ENCODE measurements at regions of chr19 and their contacts with region 1.

Region 1: GRCh38 chr19:53172892-53173291 is 14.0 kb upstream of the ZNF347 start:
- DNase-seq: no peak
- H3K4me3 ChIP-seq: no peak overlapping the region
- H3K27ac ChIP-seq: no peak overlapping the region
- H3K4me1 ChIP-seq: no peaks in the 10 kb centered on the region
- H3K27me3 ChIP-seq: no peaks in the 10 kb centered on the region
- CTCF ChIP-seq: no peak

Region 2: DNA sequence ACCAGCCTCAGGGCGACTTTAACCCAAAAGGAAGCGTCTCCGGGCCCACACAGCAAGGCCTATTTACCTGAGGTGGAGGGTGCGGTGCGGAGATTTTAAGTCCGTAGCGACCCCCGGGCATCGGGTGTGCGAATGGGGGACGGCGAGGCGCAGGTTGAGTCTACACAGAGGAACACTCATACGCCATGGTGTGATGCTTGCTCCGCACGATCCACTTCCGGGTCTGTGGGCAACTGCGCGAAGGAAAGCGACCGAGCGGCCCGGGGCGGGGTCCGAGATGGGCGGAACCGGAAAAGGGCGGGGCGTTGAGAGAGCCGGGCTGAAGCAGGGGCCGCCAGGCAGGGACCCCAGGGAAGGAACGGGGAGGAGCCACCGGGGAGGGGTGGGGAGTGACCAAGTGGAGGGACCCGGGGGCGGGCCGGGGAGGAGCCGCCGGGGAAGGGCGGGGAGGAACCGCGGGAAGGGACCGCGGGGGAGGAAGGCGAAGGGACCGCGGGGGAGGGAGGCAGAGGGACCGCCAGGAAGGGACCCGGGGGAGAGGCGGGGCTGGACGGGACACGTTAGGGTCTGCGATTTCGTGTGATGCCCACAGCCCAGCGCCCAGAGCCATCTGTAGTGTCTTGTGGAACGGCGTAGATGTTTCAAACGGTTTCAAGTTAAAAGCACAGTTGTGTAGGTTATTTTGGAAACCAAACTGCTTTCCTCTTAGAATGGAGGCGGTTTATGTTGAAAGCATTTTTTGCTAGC is 69.5 kb before region 1 on chr19 and contains the start of gene ZNF160:
- CTCF ChIA-PET with region 1: no interaction called
- POLR2A ChIA-PET with region 1: no interaction called
- intact Hi-C with region 1: no loop called
- DNase-seq: peak; percentile 92 to 99
- H3K4me3 ChIP-seq: peak within 1 kb of the TSS; percentile 94
- H3K27ac ChIP-seq: peak within 1 kb of the TSS; percentile 60
- H3K4me1 ChIP-seq: peaks cover 12% of the 10 kb centered on the region
- H3K27me3 ChIP-seq: no peaks in the 10 kb centered on the region
- CTCF ChIP-seq: no peak
- total RNA-seq, gene ZNF160: 25.1 and 27.4 TPM in 2 replicates

Region 3: GRCh38 chr19:53183146-53183764 is 10.4 kb after region 1 on chr19:
- CTCF ChIA-PET with region 1: no interaction called
- POLR2A ChIA-PET with region 1: interaction called, 31 read pairs
- intact Hi-C with region 1: no loop called
- DNase-seq: peak in 1 of 2 experiments; percentile 19
- H3K4me3 ChIP-seq: no peak overlapping the region
- H3K27ac ChIP-seq: no peak overlapping the region
- H3K4me1 ChIP-seq: no peaks in the 10 kb centered on the region
- H3K27me3 ChIP-seq: no peaks in the 10 kb centered on the region
- CTCF ChIP-seq: no peak

Region 4: GRCh38 chr19:53212703-53213320 is 39.9 kb after region 1 on chr19:
- CTCF ChIA-PET with region 1: no interaction called
- POLR2A ChIA-PET with region 1: no interaction called
- intact Hi-C with region 1: no loop called
- DNase-seq: no peak
- H3K4me3 ChIP-seq: no peak overlapping the region
- H3K27ac ChIP-seq: no peak overlapping the region
- H3K4me1 ChIP-seq: no peaks in the 10 kb centered on the region
- H3K27me3 ChIP-seq: no peaks in the 10 kb centered on the region
- CTCF ChIP-seq: no peak

Measured in PC-9 (cell line).